Activated CD4-positive, alpha-beta T cell treated with anti-CD3 and anti-CD28 coated beads, Interleukin-2, amount 10 ng/mL, durations not matched to agents 24 days and 14 days (primary cell): ENCODE measurements at regions of chr9 and their contacts with region 1.

Region 1: DNA sequence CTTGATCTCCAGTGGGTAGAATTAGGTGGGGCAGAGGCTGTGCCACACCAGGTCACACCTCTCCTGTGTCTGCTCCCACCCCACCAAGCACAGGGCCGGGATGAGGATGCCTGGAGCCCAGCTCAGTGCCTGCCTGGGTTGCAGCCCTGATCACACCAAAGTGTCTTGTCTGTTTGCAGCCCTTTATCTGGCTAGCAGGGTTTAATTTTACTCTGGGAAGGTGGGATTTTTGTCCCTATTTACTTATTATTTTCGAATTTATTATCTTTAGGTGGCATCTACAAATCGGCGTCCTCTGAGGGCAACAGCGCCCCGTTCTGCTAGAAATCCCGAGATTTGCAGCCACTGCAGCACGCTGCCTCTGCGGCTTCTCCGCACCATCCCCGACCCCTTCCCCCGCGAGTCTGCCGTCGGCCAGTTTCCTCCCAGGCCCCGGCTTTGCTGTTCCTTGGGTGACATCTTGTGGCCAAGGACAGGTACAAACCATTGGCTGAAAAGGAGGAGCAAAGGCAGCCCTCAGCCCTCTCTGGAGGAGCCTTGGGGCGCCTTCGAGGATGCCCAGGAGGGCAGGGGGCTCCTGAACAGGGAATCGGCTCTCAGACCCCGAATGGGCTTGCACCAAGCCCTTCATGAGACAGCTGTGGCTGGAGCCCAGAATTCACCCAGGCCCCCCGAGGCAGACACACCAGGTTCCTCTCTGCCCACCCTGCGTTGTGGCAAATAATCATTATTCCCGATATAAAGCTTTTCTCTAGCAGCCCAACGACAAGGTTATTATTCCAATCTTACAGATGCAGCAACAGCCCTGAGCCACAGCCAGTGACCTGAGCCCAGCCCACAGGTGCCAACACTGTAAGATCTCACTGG is 113.0 kb downstream of the GAPVD1 start:
- DNase-seq: peak; percentile 90
- H3K4me3 Mint-ChIP-seq: peak overlapping the region; percentile 70
- H3K27ac Mint-ChIP-seq: no peak overlapping the region
- H3K4me1 Mint-ChIP-seq: peaks cover 4% of the 10 kb centered on the region
- H3K27me3 Mint-ChIP-seq: peaks cover 3% of the 10 kb centered on the region

Region 2: GRCh38 chr9:124771021-124771866 is 603.4 kb before region 1 on chr9 and contains the start of gene NR6A1:
- intact Hi-C with region 1: loop called (anchors 1 kb)
- DNase-seq: peak; percentile 99
- H3K4me3 Mint-ChIP-seq: peak within 1 kb of the TSS; percentile 91
- H3K27ac Mint-ChIP-seq: peak within 1 kb of the TSS; percentile 94
- H3K4me1 Mint-ChIP-seq: peaks cover 44% of the 10 kb centered on the region
- H3K27me3 Mint-ChIP-seq: peaks cover 63% of the 10 kb centered on the region
- total RNA-seq, gene NR6A1: 2.3 and 2.7 TPM in 2 replicates

Region 3: DNA sequence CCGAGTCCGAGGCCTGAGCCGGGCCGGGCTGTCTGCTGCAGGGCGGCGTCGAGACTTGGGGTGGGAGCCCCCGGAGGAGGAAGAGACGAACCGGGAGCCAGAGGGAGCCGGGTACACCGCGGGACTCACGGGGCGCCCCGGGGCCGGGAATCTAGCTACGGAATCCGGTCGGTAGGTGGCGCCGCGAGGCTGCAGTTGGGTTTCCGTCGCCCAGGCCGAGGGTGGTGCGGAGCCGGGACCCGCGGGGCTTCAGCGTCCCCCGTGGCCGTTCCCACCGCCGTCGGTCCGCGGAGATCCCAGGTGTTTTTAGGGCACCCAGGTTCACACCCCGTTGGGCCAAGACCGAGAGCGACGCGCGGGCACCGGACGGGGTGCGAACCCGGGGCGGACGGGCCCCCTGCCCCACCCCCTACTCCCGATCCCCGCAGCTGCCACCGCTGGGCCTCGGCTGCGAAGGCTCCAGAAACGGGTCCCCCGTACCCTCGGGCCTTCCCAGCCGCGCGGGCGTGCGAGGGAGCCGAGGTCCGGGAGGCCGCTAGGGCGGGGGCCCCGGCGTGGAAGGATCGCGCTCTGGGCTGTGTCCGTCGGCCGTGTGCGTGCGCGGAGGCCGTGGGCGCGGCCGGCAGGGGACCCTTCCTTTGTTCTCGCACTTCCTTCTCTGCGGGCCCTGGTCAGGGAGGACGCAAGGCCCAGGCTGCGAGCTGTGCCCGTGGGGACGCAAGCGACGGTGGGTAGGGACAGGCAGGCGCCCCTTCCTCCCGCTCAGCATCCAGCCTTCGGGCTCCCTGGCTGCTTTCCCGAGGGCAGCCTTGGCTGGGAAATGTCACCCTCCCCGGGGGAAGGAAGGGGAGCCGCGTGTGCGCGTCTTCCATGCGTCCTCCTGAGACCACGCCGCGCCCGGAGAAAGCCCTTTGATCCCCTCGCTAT is 33.6 kb after region 1 on chr9:
- intact Hi-C with region 1: no loop called
- DNase-seq: peak; percentile 93
- H3K4me3 Mint-ChIP-seq: peak overlapping the region; percentile 80
- H3K27ac Mint-ChIP-seq: no peak overlapping the region
- H3K4me1 Mint-ChIP-seq: peaks cover 10% of the 10 kb centered on the region
- H3K27me3 Mint-ChIP-seq: peaks cover 14% of the 10 kb centered on the region